Caco-2 (cell line): ENCODE measurements at regions of chrX and their contacts with region 1.

Region 1: DNA sequence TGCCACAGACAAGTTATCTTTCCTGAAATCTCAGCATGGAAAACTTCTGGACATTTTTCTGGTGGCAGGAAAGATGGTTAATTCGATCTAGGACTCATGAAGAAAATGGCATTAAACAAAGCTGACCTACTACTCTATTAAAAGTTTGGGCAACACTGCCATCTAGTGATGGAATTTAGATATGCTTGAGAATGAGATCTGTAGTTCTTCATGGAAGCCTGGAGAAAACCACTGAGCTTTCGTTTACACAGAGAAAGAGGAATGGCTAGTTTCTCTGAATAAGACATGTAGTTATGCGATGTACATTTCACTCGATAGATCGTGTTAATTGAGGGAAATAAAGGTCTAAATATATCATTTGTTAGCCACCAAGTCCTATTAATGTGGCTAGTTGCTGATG is 51.7 kb upstream of the CHRDL1 start:
- DNase-seq: peak in 1 of 2 experiments; percentile 43
- H3K4me3 ChIP-seq: no peak overlapping the region
- H3K4me3 Mint-ChIP-seq: no peak overlapping the region
- H3K27ac Mint-ChIP-seq: no peak overlapping the region
- H3K4me1 ChIP-seq: no peaks in the 10 kb centered on the region
- H3K4me1 Mint-ChIP-seq: no peaks in the 10 kb centered on the region
- H3K27me3 ChIP-seq: no peaks in the 10 kb centered on the region
- H3K27me3 Mint-ChIP-seq: no peaks in the 10 kb centered on the region
- CTCF ChIP-seq: peak in 1 of 2 experiments; percentile 28

Region 2: GRCh38 chrX:110450050-110450449 is 397.3 kb before region 1 on chrX:
- CTCF ChIA-PET with region 1: interaction called, 5 read pairs
- POLR2A ChIA-PET with region 1: no interaction called
- intact Hi-C with region 1: loop called (anchors 1 kb)
- DNase-seq: peak; percentile 56 to 74
- H3K4me3 ChIP-seq: no peak overlapping the region
- H3K4me3 Mint-ChIP-seq: no peak overlapping the region
- H3K27ac Mint-ChIP-seq: no peak overlapping the region
- H3K4me1 ChIP-seq: no peaks in the 10 kb centered on the region
- H3K4me1 Mint-ChIP-seq: no peaks in the 10 kb centered on the region
- H3K27me3 ChIP-seq: no peaks in the 10 kb centered on the region
- H3K27me3 Mint-ChIP-seq: peaks cover 4% of the 10 kb centered on the region
- CTCF ChIP-seq: peak; percentile 56 to 59

Region 3: GRCh38 chrX:110588164-110588563 is 259.2 kb before region 1 on chrX:
- CTCF ChIA-PET with region 1: interaction called, 3 read pairs
- POLR2A ChIA-PET with region 1: no interaction called
- intact Hi-C with region 1: loop called (anchors 5 kb)
- DNase-seq: peak in 1 of 2 experiments; percentile 1
- H3K4me3 ChIP-seq: no peak overlapping the region
- H3K4me3 Mint-ChIP-seq: no peak overlapping the region
- H3K27ac Mint-ChIP-seq: no peak overlapping the region
- H3K4me1 ChIP-seq: no peaks in the 10 kb centered on the region
- H3K4me1 Mint-ChIP-seq: no peaks in the 10 kb centered on the region
- H3K27me3 ChIP-seq: no peaks in the 10 kb centered on the region
- H3K27me3 Mint-ChIP-seq: no peaks in the 10 kb centered on the region
- CTCF ChIP-seq: no peak

Region 4: DNA sequence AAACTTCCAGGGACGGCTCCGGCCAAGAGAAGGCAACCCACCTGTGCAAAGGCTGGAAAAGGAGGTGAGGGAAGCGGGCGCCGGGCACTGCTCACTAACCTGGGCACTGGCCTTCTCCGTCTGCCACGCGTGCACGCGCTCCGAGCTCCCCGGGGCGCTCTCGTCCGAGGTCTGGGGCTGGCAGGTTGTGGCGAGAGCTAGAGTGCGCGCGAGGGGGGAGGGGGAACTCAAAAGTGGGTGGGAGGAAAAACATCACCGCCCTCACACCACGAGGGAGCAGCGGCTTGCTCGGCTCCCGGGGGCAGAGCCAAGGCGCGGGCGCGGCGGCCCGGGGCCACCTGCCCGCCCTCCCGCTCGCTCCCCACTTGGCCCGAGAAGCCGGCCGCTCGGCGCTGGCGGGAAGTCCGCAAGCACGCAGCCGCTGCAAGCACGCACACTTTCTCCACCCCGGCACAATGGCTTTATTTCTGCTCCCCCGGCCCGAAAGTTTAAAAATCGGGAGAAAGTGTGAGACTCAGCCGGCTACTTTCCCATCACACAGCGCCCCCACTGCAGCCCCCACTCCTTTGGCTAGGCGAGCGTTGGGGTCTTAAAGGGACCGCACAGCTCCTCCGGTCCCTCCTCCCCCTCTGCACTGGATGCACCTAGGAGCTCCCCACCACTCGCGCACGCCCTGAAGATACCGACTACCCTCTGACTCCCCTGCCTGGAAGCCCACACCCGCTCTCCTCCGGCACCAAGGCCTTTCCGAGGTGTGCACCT is 51.5 kb before region 1 on chrX and contains the start of gene CHRDL1:
- CTCF ChIA-PET with region 1: no interaction called
- POLR2A ChIA-PET with region 1: no interaction called
- intact Hi-C with region 1: no loop called
- DNase-seq: no peak
- H3K4me3 ChIP-seq: no peak within 1 kb of the TSS
- H3K4me3 Mint-ChIP-seq: no peak within 1 kb of the TSS
- H3K27ac Mint-ChIP-seq: no peak within 1 kb of the TSS
- H3K4me1 ChIP-seq: no peaks in the 10 kb centered on the region
- H3K4me1 Mint-ChIP-seq: no peaks in the 10 kb centered on the region
- H3K27me3 ChIP-seq: no peaks in the 10 kb centered on the region
- H3K27me3 Mint-ChIP-seq: no peaks in the 10 kb centered on the region
- CTCF ChIP-seq: no peak
- total RNA-seq, gene CHRDL1: not detected in 2 replicates